Prostate gland (tissue), 2 donors: ENCODE measurements at regions of chr15 and their contacts with region 1.

Region 1: DNA sequence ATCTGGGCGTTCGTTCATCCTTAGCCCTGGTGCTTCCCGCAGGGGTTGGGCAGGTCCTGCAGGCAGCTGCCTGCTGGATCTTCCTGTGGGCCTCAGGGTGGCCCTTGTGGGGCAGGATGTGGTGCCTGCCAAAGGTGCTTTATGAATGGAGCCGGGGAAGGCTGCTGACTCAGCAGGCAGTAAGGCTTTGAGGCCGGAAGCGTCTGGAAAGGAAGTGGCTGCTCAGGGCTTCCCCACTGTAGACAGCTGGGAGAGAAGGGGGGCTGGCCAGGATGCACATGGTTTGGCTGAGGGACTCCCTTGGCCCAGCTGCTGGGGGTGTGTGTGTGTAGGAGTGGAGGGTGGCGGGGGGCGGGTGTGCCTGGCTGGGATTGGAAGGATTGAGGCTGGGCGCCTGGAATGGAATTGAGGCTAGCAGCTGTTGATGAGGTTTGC is 12.9 kb downstream of the CD276 start:
- DNase-seq: peak; percentile 75
- H3K4me3 ChIP-seq: no peak overlapping the region
- H3K27ac ChIP-seq: peak overlapping the region in 1 of 2 donors; percentile 6
- H3K4me1 ChIP-seq: no peaks in the 10 kb centered on the region
- H3K27me3 ChIP-seq: no peaks in the 10 kb centered on the region
- CTCF ChIP-seq: no peak
- POLR2A ChIP-seq: no peak

Region 2: GRCh38 chr15:73305331-73306211 is 391.5 kb before region 1 on chr15:
- intact Hi-C with region 1: loop called (anchors 10 kb)
- DNase-seq: peak; percentile 21
- H3K4me3 ChIP-seq: no peak overlapping the region
- H3K27ac ChIP-seq: no peak overlapping the region
- H3K4me1 ChIP-seq: no peaks in the 10 kb centered on the region
- H3K27me3 ChIP-seq: no peaks in the 10 kb centered on the region
- CTCF ChIP-seq: peak in 2 of 4 experiments; percentile 30 to 39
- POLR2A ChIP-seq: no peak

Region 3: GRCh38 chr15:73569370-73569769 is 127.7 kb before region 1 on chr15:
- intact Hi-C with region 1: loop called (anchors 5 kb)
- DNase-seq: no peak
- H3K4me3 ChIP-seq: no peak overlapping the region
- H3K27ac ChIP-seq: no peak overlapping the region
- H3K4me1 ChIP-seq: no peaks in the 10 kb centered on the region
- H3K27me3 ChIP-seq: no peaks in the 10 kb centered on the region
- CTCF ChIP-seq: no peak
- POLR2A ChIP-seq: no peak

Region 4: GRCh38 chr15:73633111-73633990 is 63.7 kb before region 1 on chr15 and contains the start of gene NPTN:
- intact Hi-C with region 1: loop called (anchors 5 kb)
- DNase-seq: peak; percentile 98
- H3K4me3 ChIP-seq: peak within 1 kb of the TSS; percentile 92 to 94
- H3K27ac ChIP-seq: peak within 1 kb of the TSS; percentile 90 to 96
- H3K4me1 ChIP-seq: peaks cover 5% of the 10 kb centered on the region
- H3K27me3 ChIP-seq: no peaks in the 10 kb centered on the region
- CTCF ChIP-seq: peak in 1 of 4 experiments; percentile 18
- POLR2A ChIP-seq: peak; percentile 84
- total RNA-seq, gene NPTN: 147 to 266 TPM

Region 5: DNA sequence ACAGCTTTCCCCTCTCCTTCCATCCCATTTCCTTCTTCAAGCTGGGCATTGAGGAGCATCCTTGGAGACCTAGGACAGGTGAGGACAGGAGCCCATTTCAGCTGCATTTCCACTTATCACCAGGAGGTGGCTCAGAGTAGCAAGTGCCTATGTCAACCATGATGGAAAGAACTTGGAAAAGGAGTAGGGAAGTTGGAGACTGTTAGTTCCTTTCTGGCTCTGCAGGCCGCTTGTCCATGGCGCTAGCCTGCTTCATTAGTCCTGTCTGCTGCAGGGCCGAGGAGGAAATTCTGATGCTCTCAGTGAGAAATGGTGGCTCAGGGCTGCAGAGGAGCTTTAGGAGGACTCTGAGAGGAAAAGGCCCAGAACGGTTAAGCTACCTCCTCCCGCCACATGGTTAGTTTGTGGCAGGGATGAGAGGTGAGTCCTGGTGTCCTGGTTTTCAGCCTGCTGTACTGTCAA is 19.9 kb before region 1 on chr15:
- intact Hi-C with region 1: loop called (anchors 1 kb)
- DNase-seq: peak; percentile 69
- H3K4me3 ChIP-seq: no peak overlapping the region
- H3K27ac ChIP-seq: no peak overlapping the region
- H3K4me1 ChIP-seq: no peaks in the 10 kb centered on the region
- H3K27me3 ChIP-seq: no peaks in the 10 kb centered on the region
- CTCF ChIP-seq: peak; percentile 65 to 90 (median 87)
- POLR2A ChIP-seq: no peak

Region 6: DNA sequence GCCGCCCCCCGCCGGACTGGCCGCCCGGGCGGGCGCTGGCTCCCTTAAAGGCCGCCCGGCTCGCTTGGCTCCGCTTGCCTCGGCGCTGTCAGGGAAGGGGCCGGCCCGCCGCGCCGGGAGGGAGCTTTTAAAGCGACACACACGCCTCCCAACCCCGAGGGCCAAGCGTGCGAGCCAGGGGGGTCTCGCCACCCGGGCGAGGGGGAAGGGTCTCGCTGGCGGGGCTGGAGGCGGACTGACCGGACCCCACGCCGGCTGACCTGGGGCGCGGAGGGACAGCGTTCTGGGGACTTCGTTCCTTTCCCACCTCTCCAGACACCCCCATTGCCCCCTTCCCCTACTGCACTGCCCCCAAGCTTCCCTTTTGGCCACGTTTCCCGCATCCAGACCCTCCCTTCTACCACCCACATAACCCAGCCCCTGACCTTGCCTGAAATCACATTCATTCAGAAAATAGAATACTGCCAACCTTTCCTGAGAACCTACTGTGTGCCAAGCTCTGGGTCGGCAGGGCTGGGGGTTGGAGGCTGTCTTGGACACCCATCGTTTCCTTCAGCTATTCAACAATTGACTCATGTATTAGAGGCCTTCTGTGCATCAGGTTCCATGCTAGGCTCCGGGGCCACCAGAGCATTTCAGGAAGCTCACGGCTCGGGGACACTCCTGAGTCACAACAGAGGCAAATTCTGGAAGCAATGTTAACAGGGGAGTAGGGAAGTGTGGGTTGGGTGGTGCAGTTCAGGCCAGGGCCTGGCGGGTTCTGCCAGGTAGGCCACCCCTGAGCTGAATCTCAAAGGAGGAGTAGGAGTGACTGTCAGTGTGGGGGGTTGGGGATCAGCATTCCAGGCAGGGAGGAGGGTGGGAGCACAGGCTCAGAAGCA is 56.4 kb after region 1 on chr15 and contains the start of gene INSYN1:
- intact Hi-C with region 1: no loop called
- DNase-seq: peak; percentile 32
- H3K4me3 ChIP-seq: peak within 1 kb of the TSS; percentile 52 to 59
- H3K27ac ChIP-seq: peak within 1 kb of the TSS; percentile 17 to 69
- H3K4me1 ChIP-seq: no peaks in the 10 kb centered on the region
- H3K27me3 ChIP-seq: no peaks in the 10 kb centered on the region
- CTCF ChIP-seq: no peak
- POLR2A ChIP-seq: no peak
- total RNA-seq, gene INSYN1: 17.3 to 26.0 TPM

Region 7: DNA sequence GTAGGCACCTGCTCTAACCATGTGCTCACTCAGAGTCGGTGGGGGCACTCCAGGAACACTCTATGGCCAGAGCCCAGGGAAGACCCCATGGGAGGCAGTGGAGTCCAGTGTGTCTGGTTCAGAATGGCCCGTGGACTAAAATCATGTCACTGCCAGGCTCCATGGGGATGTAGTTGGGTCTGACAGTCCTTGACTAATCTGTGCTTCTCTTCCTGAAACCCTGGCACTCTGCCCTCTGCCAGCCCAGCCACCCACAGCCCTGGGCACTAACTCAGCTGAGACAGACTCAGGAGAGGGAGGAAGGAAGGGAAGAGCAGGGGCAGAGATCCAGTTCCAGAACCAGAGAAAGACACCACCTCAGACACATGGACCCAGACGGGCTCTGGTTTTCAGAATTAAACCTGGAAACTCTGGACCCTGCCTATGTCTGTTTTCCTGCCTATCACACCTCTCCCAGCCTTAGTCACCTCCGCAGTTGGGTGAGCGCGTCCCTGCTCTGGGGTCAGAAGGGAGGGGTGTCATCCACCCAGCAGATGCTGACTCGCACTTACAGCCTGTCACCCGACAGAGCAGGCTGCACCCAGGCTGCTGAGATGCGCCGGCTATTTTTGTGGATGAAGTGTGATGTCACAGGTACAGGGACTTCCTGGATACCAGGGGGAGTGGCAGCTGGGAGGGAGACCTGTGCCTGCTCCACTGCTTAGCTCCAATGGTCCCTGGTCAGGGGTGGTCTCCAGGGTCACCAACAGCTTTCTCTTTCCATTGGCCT is 112.9 kb after region 1 on chr15:
- intact Hi-C with region 1: no loop called
- DNase-seq: no peak
- H3K4me3 ChIP-seq: no peak overlapping the region
- H3K27ac ChIP-seq: no peak overlapping the region
- H3K4me1 ChIP-seq: no peaks in the 10 kb centered on the region
- H3K27me3 ChIP-seq: no peaks in the 10 kb centered on the region
- CTCF ChIP-seq: no peak
- POLR2A ChIP-seq: no peak

Region 8: GRCh38 chr15:74053941-74054529 is 357.0 kb after region 1 on chr15:
- intact Hi-C with region 1: no loop called
- DNase-seq: peak; percentile 58
- H3K4me3 ChIP-seq: no peak overlapping the region
- H3K27ac ChIP-seq: no peak overlapping the region
- H3K4me1 ChIP-seq: no peaks in the 10 kb centered on the region
- H3K27me3 ChIP-seq: no peaks in the 10 kb centered on the region
- CTCF ChIP-seq: peak; percentile 27 to 66 (median 50)
- POLR2A ChIP-seq: no peak